Head of caudate nucleus (tissue), 42 donors: ENCODE measurements at regions of chr4 and their contacts with region 1.

Region 1: GRCh38 chr4:52659001-52659721 is at the start of gene USP46:
- DNase-seq: peak; percentile 10 to 88 (median 74)

Region 2: DNA sequence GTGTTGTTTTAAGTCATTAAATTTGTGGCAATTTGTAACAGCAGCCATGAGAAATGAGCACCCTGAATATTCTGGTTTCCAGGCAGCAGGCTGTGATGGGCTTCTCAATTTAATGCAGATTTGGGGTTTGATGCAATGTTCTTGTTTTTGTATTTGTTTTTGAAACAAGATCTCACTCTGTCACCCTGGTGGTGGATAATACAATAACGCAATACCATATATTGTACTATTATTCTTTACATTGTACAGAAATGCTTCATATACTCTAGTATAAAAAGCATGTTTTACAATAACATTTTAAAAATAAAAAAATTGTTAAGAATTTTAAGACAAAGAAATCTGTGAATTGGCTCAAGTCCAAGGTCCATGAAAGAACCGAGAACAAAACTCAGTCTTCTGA is 129.2 kb before region 1 on chr4:
- intact Hi-C with region 1: no loop called
- DNase-seq: no peak

Region 3: GRCh38 chr4:52627876-52628275 is 31.3 kb before region 1 on chr4:
- intact Hi-C with region 1: no loop called
- DNase-seq: peak in 7 of 42 donors; percentile 6 to 33 (median 24)

Region 4: DNA sequence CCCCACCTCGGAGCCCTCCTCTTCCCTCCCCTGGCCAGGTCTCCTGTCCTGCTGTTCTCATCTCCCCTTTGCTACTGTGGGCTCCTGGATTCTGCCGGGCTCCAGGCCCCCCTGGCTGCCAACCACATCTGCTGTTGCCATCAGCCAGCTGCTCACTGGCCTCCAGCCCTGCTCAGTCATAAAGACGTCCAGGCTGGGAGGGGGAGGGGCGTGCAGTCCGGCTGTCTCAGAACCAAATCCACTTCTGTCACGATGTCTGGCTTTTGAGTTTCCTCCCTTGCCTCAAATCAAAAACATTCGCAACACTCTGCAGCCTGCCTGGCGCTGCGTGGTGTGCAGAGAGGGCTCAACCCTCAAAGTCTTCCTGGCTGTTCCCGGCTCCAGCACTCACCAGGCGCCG is 210.0 kb after region 1 on chr4:
- intact Hi-C with region 1: loop called (anchors 5 kb)
- DNase-seq: peak; percentile 57 to 89 (median 76)

Region 5: DNA sequence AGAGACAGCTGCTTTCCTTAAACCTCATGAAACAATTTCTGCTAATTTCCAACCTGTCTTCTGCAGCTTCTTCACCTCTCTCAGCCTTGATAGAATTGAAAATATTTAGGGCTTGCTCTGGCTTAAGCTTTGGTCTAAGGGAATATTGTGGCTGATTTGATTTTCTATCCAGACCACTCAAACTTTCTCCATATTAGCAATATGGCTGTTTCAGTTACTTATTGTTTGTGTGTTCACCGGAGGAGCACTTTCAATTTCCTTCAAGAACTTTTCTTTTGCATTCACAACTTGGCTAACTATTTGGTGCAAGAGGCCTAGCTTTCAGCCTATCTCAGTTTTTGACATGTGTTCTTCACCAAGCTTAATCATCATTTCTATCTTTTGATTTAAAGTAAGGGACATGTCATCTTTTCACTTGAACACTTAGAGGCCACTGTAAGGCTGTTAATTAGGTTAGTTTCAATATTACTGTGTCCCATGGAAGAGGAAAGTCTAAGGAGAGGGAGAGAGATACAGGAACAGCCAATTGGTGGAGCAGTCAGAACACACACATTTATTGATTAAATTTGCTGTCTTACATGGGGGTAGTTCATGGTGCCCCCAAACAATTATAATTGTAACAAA is 416.1 kb after region 1 on chr4:
- intact Hi-C with region 1: no loop called
- DNase-seq: no peak